ENCODE measurements at regions of chr5 and their contacts with region 1.

Region 1: GRCh38 chr5:170571875-170572852 is 68.3 kb downstream of the KCNIP1 start:
- DNase-seq: peak; percentile 90
- H3K4me3 Mint-ChIP-seq: no peak overlapping the region
- H3K27ac Mint-ChIP-seq: no peak overlapping the region
- H3K4me1 Mint-ChIP-seq: peaks cover 17% of the 10 kb centered on the region
- H3K27me3 Mint-ChIP-seq: peaks cover 55% of the 10 kb centered on the region

Region 2: GRCh38 chr5:170466988-170467707 is 105.0 kb before region 1 on chr5:
- CTCF ChIA-PET with region 1: interaction called, 4 read pairs
- POLR2A ChIA-PET with region 1: interaction called, 11 read pairs
- intact Hi-C with region 1: loop called (anchors 1 kb)
- DNase-seq: peak; percentile 81
- H3K4me3 Mint-ChIP-seq: no peak overlapping the region
- H3K27ac Mint-ChIP-seq: no peak overlapping the region
- H3K4me1 Mint-ChIP-seq: no peaks in the 10 kb centered on the region
- H3K27me3 Mint-ChIP-seq: peaks cover 9% of the 10 kb centered on the region

Region 3: DNA sequence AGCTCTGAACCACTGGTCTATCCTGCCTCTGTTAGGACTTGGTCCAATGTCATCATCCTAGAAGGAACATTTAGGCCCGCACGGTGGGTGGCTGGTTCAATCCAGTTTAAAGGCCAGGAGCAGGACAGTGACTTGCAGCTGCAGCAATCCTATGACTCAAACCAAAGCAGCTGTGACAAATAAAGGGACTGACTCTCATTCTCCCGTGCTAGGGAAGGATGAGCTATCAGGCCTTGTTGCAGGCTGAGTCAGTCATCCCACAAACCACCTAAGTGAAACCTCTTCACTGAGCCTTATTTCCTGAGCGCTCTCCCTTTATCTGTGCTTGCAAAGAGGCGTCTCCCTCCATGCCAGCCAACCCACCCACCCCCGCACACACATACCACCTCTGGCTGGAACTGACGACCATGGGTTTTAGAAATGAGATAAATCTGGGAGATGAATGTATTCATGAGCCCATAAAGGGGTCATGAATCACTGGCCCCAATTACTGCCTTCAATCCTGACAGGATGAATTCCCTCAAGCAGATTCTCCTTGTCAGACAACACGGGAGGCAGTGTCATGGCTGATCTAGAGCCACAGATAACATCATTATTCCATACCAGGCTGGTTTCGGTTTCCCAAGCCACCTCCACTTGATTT is 25.1 kb after region 1 on chr5:
- CTCF ChIA-PET with region 1: interaction called, 8 read pairs
- POLR2A ChIA-PET with region 1: interaction called, 16 read pairs
- intact Hi-C with region 1: loop called (anchors 1 kb)
- DNase-seq: peak; percentile 77
- H3K4me3 Mint-ChIP-seq: no peak overlapping the region
- H3K27ac Mint-ChIP-seq: no peak overlapping the region
- H3K4me1 Mint-ChIP-seq: peaks cover 19% of the 10 kb centered on the region
- H3K27me3 Mint-ChIP-seq: peaks cover 57% of the 10 kb centered on the region